ENCODE measurements at regions of chr19 and their contacts with region 1.

Region 1: DNA sequence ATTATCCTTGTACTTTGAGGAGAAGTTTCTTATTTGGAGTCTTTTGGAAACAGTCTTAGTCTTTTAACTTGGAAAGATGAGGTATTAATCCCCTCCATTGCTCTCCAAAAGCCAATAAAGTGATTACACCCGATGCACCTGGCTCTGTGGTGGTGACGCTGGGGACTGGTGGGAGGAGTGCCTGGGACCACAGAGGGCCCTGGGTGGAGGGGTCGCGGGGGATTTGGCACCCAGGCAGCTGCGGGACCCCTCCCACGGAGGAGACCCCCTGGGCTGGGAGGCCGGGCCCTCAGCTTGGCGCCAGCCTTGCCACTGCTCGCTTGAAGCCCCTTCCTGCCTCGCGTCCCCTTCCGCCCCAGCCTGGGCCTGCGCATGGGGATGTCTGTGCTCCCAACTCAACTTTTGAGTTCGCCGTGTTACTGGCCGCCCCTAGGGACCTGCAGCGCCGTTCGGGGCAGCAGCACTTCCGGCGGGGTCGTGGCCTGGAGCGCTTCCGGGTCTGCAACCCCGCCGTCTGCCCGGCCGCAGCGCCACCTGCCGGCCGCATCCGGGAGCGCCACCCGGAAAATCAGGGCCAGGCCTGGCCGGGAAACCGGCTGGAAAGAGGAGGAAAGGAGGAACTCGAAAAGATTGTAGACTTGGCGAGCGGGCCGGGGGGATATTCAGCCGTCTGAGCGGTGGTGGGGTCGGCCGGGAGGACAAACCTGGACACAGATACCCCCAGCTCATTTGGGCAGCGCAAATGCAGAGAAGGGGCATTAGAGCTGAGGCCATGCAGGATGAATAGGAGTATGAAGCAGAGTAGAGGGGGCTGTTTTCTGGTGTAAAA is 8.4 kb downstream of the PEAK3 start:
- DNase-seq: peak; percentile 78 to 86
- ATAC-seq: peak; percentile 37 to 66; a peak in 5 of 6 replicates
- H3K4me3 ChIP-seq: peak overlapping the region; percentile 34
- H3K27ac ChIP-seq: peak overlapping the region; percentile 57 to 84; a peak in 5 of 6 replicates
- H3K4me1 ChIP-seq: peaks cover 20% of the 10 kb centered on the region
- CTCF ChIP-seq: peak; percentile 76
- EP300 ChIP-seq: no peak
- POLR2A ChIP-seq: no peak
- RAD21 ChIP-seq: peak; percentile 41 to 60

Region 2: GRCh38 chr19:2261438-2262172 is 12.0 kb before region 1 on chr19:
- CTCF ChIA-PET with region 1: interaction called, 25 read pairs
- POLR2A ChIA-PET with region 1: no interaction called
- DNase-seq: peak in 1 of 2 experiments; percentile 56
- ATAC-seq: no peak
- H3K4me3 ChIP-seq: no peak overlapping the region
- H3K27ac ChIP-seq: 0 out of 6 replicates have a peak overlapping the region, but pooled peaks of 1 of the 2 experiments have one; percentile 41
- H3K4me1 ChIP-seq: peaks cover 12% of the 10 kb centered on the region
- CTCF ChIP-seq: peak; percentile 45
- EP300 ChIP-seq: no peak
- POLR2A ChIP-seq: no peak
- RAD21 ChIP-seq: peak in 1 of 2 experiments; percentile 28; a peak in 1 of 5 replicates

Region 3: DNA sequence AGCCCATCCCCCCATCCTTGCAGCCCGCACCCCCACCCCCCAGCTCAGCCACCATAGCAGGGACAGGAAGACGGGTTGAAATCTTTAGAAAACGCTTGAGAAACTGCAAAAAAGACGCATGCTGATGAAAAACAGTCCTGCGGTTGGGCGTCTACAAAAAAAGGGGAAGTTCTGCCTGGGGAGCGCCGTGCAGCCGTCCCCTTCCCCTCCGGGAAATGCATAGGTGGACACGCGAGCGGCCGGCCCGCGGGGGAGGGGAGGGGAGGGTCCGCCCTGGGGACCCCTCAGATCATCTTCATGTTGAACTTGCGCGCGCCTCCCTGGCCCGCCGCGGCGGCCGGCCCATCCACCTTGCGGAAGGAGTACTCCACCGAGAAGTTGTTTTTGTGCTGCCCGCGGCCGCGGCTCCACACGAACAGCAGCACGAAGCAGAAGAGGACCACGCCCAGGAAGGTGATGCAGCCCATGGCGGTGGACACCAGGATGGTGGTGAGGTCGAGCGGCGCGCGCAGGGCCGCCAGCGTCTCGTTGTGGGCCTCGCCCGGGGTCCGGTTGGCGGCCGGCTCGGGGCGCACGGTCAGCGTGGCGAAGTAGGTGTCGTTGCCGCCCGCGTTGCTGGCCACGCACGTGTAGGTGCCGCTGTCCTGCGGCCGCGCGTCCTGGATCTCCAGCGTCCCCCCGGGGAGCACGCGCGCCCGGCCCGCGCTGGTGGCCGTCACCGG is 16.3 kb after region 1 on chr19:
- CTCF ChIA-PET with region 1: interaction called, 11 read pairs
- POLR2A ChIA-PET with region 1: no interaction called
- DNase-seq: no peak
- ATAC-seq: peak; percentile 35 to 46; a peak in 3 of 6 replicates
- H3K4me3 ChIP-seq: peak overlapping the region; percentile 40
- H3K27ac ChIP-seq: peak overlapping the region in 1 of 2 experiments; percentile 47; a peak in 3 of 6 replicates
- H3K4me1 ChIP-seq: peaks cover 5% of the 10 kb centered on the region; the same call in 2 of the 3 replicates
- CTCF ChIP-seq: no peak
- EP300 ChIP-seq: no peak
- POLR2A ChIP-seq: no peak
- RAD21 ChIP-seq: no peak

Region 4: GRCh38 chr19:2328401-2329148 is 55.0 kb after region 1 on chr19 and contains the starts of genes LSM7 and SPPL2B:
- CTCF ChIA-PET with region 1: no interaction called
- POLR2A ChIA-PET with region 1: no interaction called
- DNase-seq: peak; percentile 84 to 87
- ATAC-seq: peak; percentile 80 to 89
- H3K4me3 ChIP-seq: peak within 1 kb of the TSS; percentile 100
- H3K27ac ChIP-seq: peak within 1 kb of the TSS; percentile 98 to 99
- H3K4me1 ChIP-seq: peaks cover 28% of the 10 kb centered on the region
- CTCF ChIP-seq: no peak
- EP300 ChIP-seq: no peak
- POLR2A ChIP-seq: peak; percentile 77
- RAD21 ChIP-seq: no peak
- polyA plus RNA-seq, gene LSM7: 112 and 140 TPM in 2 replicates
- polyA plus RNA-seq, gene SPPL2B: 11.3 and 11.4 TPM in 2 replicates

Region 5: GRCh38 chr19:2391118-2391725 is 117.7 kb after region 1 on chr19:
- CTCF ChIA-PET with region 1: interaction called, 21 read pairs
- POLR2A ChIA-PET with region 1: no interaction called
- DNase-seq: peak; percentile 39 to 79
- ATAC-seq: peak; percentile 62 to 68; a peak in 5 of 6 replicates
- H3K4me3 ChIP-seq: no peak overlapping the region
- H3K27ac ChIP-seq: no peak overlapping the region
- H3K4me1 ChIP-seq: peaks cover 8% of the 10 kb centered on the region; the same call in 1 of the 3 replicates
- CTCF ChIP-seq: peak; percentile 60
- EP300 ChIP-seq: no peak
- POLR2A ChIP-seq: no peak
- RAD21 ChIP-seq: peak; percentile 66 to 69

Measured in A549 (cell line).